Right ventricle myocardium superior (tissue), 1 donor: ENCODE measurements at regions of chr15 and their contacts with region 1.

Region 1: GRCh38 chr15:40160689-40161688 is at the start of gene BUB1B:
- DNase-seq: peak; percentile 94
- ATAC-seq: peak; percentile 99
- total RNA-seq, gene BUB1B: 1.3 TPM

Region 2: GRCh38 chr15:40114218-40114617 is 46.8 kb before region 1 on chr15:
- intact Hi-C with region 1: loop called (anchors 5 kb)
- DNase-seq: no peak
- ATAC-seq: no peak